Activated CD8-positive, alpha-beta T cell treated with anti-CD3 and anti-CD28 coated beads for 36 hours (primary cell): ENCODE measurements at regions of chr10 and their contacts with region 1.

Region 1: DNA sequence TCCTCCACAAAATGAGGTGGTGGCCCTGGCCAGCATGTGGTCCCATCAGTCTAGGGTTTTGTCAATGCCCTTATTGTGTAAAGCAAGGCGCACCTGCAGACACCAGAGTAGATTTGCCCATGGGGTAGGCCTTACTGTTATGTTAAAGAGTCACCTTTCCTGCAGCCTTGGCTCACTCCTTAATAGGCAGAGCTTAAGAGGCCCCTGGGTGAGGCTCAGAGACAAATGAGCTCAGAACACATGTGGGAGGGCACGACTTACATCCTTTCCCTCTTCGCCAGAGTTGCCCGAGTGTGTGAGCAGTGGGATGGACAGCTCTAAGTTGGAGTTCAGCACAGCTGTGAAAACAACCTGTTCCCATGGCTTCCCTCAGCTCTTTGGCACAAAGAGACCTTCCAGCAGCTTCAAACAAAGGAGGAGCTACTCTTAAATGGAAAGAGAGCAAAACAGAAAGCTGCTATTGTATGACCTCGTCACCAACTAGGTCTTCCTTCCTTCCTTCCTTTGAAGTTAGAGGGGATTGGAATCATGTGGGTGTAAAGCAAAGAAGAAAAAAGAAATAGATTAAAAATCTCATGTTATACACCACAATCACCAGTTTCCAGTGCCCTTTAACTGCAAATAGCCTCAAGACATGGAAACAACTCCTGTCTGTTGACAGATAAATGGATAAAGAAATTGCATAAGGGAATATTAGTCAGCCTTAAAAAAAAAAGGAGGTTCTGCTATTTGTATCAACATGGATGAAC is 11.8 kb upstream of the XPNPEP1 start:
- DNase-seq: peak; percentile 44
- ATAC-seq: peak; percentile 68
- H3K4me3 Mint-ChIP-seq: peak overlapping the region; percentile 78
- H3K27ac Mint-ChIP-seq: peak overlapping the region; percentile 98
- H3K4me1 Mint-ChIP-seq: peaks cover 62% of the 10 kb centered on the region
- H3K27me3 Mint-ChIP-seq: no peaks in the 10 kb centered on the region
- CTCF ChIP-seq: no peak

Region 2: DNA sequence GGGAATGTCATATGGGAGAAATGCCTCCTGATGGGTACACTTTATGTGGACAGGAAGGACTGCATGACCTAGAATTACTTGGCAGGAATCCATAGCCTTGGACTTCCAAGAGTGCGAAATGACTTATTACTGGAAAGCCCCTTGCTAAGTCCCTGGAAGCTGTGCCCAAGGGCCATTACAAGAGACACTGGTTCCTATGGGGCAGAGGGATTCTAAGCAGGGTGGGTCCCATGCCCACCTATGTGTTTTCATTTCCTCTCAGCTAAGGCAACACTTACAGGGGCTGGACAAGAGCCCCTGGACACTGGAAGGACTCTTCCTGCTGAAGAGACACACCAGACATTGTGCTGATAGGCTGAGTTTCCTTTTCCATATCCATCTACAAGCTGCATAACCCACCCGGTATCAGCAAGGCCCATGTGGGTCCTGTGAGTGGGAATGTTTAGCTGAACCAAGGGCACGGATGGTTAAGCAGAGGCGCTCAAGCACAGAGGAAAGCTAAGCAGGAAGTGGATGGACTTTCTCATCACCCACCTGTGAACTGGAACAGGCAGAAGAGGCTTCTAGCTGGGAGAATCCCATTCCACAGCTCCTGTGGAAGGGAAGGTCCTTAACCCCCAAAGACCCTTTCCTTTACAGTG is 68.0 kb before region 1 on chr10:
- CTCF ChIA-PET with region 1: no interaction called
- POLR2A ChIA-PET with region 1: no interaction called
- intact Hi-C with region 1: no loop called
- DNase-seq: no peak
- ATAC-seq: no peak
- H3K4me3 Mint-ChIP-seq: no peak overlapping the region
- H3K27ac Mint-ChIP-seq: no peak overlapping the region
- H3K4me1 Mint-ChIP-seq: no peaks in the 10 kb centered on the region
- H3K27me3 Mint-ChIP-seq: no peaks in the 10 kb centered on the region
- CTCF ChIP-seq: no peak

Region 3: GRCh38 chr10:109922976-109923921 is 11.9 kb before region 1 on chr10 and contains the start of gene XPNPEP1:
- CTCF ChIA-PET with region 1: interaction called, 5 read pairs
- POLR2A ChIA-PET with region 1: interaction called, 10 read pairs
- intact Hi-C with region 1: no loop called
- DNase-seq: peak; percentile 89
- ATAC-seq: peak; percentile 92
- H3K4me3 Mint-ChIP-seq: peak within 1 kb of the TSS; percentile 95
- H3K27ac Mint-ChIP-seq: peak within 1 kb of the TSS; percentile 94
- H3K4me1 Mint-ChIP-seq: peaks cover 50% of the 10 kb centered on the region
- H3K27me3 Mint-ChIP-seq: no peaks in the 10 kb centered on the region
- CTCF ChIP-seq: no peak
- total RNA-seq, gene XPNPEP1: 96.5 to 97.0 TPM

Region 4: GRCh38 chr10:110109511-110109910 is 174.4 kb after region 1 on chr10:
- CTCF ChIA-PET with region 1: no interaction called
- POLR2A ChIA-PET with region 1: no interaction called
- intact Hi-C with region 1: no loop called
- DNase-seq: no peak
- ATAC-seq: no peak
- H3K4me3 Mint-ChIP-seq: no peak overlapping the region
- H3K27ac Mint-ChIP-seq: peak overlapping the region; percentile 53
- H3K4me1 Mint-ChIP-seq: peaks cover 32% of the 10 kb centered on the region
- H3K27me3 Mint-ChIP-seq: no peaks in the 10 kb centered on the region
- CTCF ChIP-seq: no peak